Mammary epithelial cell (primary cell): ENCODE measurements at regions of chr9 and their contacts with region 1.

Region 1: GRCh38 chr9:133115448-133116345 is 5.3 kb downstream of the RALGDS start:
- DNase-seq: no peak
- H3K4me3 ChIP-seq: no peak overlapping the region
- H3K27ac ChIP-seq: no peak overlapping the region
- H3K4me1 ChIP-seq: peaks cover 52% of the 10 kb centered on the region
- H3K27me3 ChIP-seq: no peaks in the 10 kb centered on the region
- CTCF ChIP-seq: no peak

Region 2: DNA sequence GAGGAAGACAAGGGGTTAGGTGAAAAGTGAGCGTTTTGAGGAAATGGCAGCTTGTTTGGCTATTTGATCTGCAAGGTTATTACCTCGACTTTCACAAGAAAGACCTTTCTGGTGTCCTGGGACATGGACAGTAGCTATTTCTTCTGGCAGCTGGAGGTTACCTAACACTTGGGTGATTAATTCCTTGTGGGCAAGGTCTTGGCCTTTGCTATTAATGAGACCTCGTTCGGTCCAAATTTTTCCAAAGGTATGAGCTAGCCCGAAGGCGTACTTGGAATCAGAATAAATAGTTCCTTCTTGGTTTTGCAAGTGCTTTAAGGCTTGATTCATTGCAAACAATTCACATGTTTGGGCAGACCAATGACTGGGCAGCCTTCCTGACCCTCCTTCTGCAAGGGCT is 80.0 kb before region 1 on chr9:
- CTCF ChIA-PET with region 1: no interaction called
- dilution Hi-C with region 1: loop called (anchors 5 kb)
- in situ Hi-C with region 1: no loop called
- intact Hi-C with region 1: no loop called
- DNase-seq: peak; percentile 44
- H3K4me3 ChIP-seq: no peak overlapping the region
- H3K27ac ChIP-seq: no peak overlapping the region
- H3K4me1 ChIP-seq: peaks cover 24% of the 10 kb centered on the region
- H3K27me3 ChIP-seq: no peaks in the 10 kb centered on the region
- CTCF ChIP-seq: no peak

Region 3: DNA sequence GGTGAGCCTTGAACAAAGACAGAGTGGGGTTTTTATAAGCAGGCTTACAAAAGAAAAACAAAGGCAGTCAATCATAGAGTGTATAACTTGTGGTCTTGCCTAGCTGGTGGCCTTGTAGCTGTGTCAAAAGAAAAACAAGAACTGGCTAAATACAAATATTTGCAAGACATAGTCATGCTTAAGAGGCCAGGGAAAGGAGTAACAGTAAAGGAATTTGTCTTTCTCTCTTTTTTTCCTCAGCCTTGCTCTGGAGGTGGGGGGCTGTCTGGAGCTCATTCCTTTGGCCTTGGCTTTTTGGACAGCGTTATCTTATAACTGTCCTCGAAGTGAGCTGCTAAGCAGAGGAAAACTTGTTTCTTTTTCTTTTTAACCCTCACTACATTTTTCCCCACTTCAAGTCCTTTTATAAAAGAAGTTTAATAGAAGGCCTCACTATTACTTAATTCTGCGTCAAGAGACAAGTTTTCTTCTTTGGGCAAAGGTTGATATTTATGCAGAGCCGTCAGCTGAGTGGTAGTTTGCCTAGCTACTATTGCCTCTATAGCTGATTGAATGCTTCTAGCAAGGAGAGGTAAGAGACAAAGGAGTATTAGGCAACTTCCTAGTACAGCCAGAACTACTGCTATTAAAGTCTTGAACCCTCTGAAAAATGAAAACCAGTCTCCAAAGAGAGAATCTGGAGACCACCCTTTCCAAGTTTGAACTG is 39.6 kb before region 1 on chr9:
- CTCF ChIA-PET with region 1: no interaction called
- dilution Hi-C with region 1: loop called (anchors 5 kb)
- in situ Hi-C with region 1: no loop called
- intact Hi-C with region 1: no loop called
- DNase-seq: peak; percentile 64
- H3K4me3 ChIP-seq: no peak overlapping the region
- H3K27ac ChIP-seq: no peak overlapping the region
- H3K4me1 ChIP-seq: no peaks in the 10 kb centered on the region
- H3K27me3 ChIP-seq: no peaks in the 10 kb centered on the region
- CTCF ChIP-seq: no peak

Region 4: DNA sequence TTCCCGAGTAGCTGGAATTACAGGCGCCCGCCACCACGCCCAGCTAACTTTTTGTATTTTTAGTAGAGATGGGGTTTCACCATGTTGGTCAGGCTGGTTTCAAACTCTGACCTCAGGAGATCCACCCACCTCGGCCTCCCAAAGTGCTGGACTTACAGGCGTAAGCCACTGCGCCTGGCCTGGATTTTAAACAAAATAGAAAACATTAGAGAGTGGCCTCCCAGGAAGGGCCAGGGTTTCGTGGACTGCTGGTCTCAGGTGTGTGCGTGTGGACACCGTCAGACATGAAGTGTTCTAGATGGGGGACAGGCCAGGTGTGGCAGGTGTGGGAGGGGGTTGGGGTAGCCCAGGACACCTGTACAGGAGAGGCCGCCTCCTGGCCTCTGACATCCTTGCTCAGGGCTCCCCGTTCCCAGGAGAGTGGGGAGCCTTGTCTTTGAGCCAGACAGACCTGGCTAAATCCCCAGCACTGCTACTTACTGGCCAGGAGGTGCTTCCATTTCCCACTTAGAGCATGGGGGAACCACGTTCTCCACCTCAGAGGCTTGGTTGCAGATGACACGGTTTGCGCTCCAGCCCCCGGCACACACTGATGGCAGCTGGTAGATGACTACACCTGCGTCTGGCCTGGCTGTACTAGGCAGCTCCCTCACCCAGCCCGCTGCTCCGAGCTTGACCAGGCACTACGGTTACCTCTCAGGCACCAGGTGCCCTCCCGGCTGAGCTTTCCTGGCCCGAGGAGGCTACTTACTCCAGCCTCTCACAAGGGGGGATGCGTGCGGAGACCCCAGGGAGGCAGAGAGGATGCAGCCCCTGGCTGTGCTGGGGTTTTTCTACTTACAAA is 55.2 kb after region 1 on chr9:
- CTCF ChIA-PET with region 1: no interaction called
- dilution Hi-C with region 1: loop called (anchors 5 kb)
- in situ Hi-C with region 1: no loop called
- intact Hi-C with region 1: no loop called
- DNase-seq: no peak
- H3K4me3 ChIP-seq: no peak overlapping the region
- H3K27ac ChIP-seq: no peak overlapping the region
- H3K4me1 ChIP-seq: no peaks in the 10 kb centered on the region
- H3K27me3 ChIP-seq: peaks cover 2% of the 10 kb centered on the region
- CTCF ChIP-seq: no peak

Region 5: GRCh38 chr9:133210202-133210532 is 94.5 kb after region 1 on chr9:
- CTCF ChIA-PET with region 1: no interaction called
- dilution Hi-C with region 1: loop called (anchors 5 kb)
- in situ Hi-C with region 1: no loop called
- intact Hi-C with region 1: no loop called
- DNase-seq: peak; percentile 87
- H3K4me3 ChIP-seq: no peak overlapping the region
- H3K27ac ChIP-seq: no peak overlapping the region
- H3K4me1 ChIP-seq: peaks cover 29% of the 10 kb centered on the region
- H3K27me3 ChIP-seq: no peaks in the 10 kb centered on the region
- CTCF ChIP-seq: no peak